ENCODE measurements at regions of chr5 and their contacts with region 1.

Region 1: GRCh38 chr5:173057062-173057924 is 1.1 kb downstream of the CREBRF start:
- DNase-seq: peak; percentile 93 to 99 (median 98)

Region 2: DNA sequence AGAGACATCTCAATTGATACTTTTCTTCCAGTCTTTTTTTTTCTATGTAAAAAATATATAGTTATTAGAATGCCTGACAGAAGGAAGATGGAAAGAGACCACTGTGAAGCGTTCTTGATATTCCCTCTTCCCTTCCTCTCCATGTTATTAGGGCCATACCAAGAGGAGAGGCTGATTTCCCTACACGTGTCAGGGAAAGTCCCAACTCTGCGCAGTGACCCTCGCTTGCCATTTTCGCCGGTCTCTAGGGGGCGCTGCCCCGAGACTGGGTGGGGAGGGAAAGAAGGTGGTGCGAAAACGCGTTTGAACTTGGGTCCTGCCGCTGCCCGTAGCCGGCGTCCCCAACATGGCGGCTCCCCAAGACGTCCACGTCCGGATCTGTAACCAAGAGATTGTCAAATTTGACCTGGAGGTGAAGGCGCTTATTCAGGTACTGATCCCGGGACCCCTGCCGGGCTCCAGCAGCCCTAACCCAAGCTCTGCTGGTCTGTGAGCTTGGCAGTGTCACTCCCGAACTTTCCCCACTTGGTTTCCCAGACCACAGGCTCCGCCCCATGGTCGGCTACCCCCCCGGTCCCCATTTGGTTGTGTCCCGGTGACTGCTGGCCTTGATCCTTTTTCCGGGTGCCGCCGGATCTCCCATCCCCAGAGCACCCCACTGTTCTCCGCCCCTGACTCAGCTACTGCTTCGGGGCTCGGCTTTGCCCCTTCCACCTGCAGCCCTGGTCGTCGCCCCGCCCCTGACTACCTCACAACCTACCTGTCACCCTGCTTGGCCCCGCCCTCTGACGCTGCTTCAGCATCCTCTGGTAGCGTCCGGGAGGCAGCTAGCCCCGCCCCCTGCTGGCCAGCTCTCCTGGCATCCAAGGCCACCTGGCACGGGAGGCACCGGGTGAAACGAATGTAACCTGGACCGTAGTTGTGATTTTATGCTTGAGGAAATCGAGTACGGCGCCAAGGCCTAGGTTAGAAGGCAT is 87.2 kb after region 1 on chr5 and contains the start of gene BNIP1:
- intact Hi-C with region 1: loop called (anchors 5 kb)
- DNase-seq: peak; percentile 84 to 97 (median 93)